Sigmoid colon (tissue), 7 donors: ENCODE measurements at regions of chrX and their contacts with region 1.

Region 1: GRCh38 chrX:123481913-123482851 is 250.7 kb downstream of the THOC2 start:
- DNase-seq: no peak
- H3K4me3 ChIP-seq: peak overlapping the region in 1 of 4 donors; percentile 14
- H3K27ac ChIP-seq: peak overlapping the region in 3 of 4 donors; percentile 67 to 78 (median 73)
- H3K4me1 ChIP-seq: peaks cover 0 to 11% (median 0%) of the 10 kb centered on the region in 4 donors
- H3K27me3 ChIP-seq: no peaks in the 10 kb centered on the region
- CTCF ChIP-seq: peak in 1 of 4 experiments; percentile 28
- EP300 ChIP-seq: peak in 1 of 4 donors; percentile 37
- POLR2A ChIP-seq: no peak

Region 2: DNA sequence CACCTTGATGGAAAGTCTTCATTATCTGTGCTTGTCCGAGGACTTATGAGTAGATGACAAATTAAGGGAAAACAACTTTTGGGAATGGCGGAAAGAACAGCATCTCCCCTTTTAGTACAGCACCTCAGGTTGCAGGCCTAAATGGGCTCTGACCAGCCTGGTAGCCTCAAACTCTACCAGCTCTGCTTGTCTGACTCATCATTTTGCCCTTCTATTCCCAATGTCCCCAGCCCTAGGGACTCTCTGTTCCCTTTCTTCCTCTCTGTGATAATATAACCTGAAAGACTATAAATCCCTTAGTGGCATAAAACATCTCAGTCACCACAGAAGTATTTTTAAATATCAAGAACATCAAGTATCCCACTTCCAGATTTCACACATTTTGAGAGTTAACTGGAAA is 128.7 kb after region 1 on chrX:
- intact Hi-C with region 1: loop called (anchors 10 kb)
- DNase-seq: no peak
- H3K4me3 ChIP-seq: no peak overlapping the region
- H3K27ac ChIP-seq: no peak overlapping the region
- H3K4me1 ChIP-seq: no peaks in the 10 kb centered on the region
- H3K27me3 ChIP-seq: no peaks in the 10 kb centered on the region
- CTCF ChIP-seq: no peak
- EP300 ChIP-seq: no peak
- POLR2A ChIP-seq: no peak

Region 3: DNA sequence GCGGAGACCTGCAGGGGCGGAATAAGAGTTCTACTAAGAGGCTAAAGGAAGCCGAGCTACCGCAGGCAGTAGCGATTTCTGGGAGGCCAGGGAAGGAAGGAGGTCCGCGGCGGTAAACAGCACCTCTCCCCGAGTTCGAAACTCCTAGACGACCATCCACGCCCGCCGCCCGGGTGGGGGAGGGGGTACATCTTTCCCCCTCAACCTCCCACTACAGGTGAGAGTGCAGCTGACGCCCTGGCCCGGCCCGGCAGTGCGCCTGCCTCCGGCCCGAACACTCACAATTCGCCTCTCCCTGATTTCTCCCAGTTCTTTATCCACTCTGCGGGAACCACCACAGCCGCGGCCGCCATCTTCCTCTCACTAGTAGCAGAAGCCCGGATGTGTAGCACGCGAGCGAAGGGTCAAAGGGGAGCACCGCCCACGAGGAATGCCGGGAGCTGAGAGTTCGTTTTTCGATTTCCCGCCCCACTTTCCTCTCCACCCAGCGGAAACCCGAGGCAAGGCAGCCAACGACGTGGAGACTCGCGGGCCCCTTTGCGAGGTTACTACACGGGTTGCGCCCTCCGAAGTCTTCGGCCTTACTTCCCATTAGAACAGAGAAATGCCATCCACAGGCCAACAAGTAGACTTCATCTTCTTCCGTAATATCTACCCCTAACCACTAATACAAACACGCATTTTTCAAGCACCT is 250.6 kb after region 1 on chrX and contains the start of gene THOC2:
- intact Hi-C with region 1: loop called (anchors 10 kb)
- DNase-seq: peak; percentile 92
- H3K4me3 ChIP-seq: peak within 1 kb of the TSS; percentile 66 to 79 (median 70)
- H3K27ac ChIP-seq: peak within 1 kb of the TSS; percentile 81 to 88 (median 84)
- H3K4me1 ChIP-seq: peaks cover 0 to 32% (median 4%) of the 10 kb centered on the region in 4 donors
- H3K27me3 ChIP-seq: no peaks in the 10 kb centered on the region
- CTCF ChIP-seq: peak; percentile 20 to 52 (median 40)
- EP300 ChIP-seq: no peak
- POLR2A ChIP-seq: peak in 1 of 2 donors; percentile 32
- total RNA-seq, gene THOC2: 85.6 to 126 (median 102) TPM

Region 4: GRCh38 chrX:124190440-124190839 is 708.3 kb after region 1 on chrX:
- intact Hi-C with region 1: no loop called
- DNase-seq: no peak
- H3K4me3 ChIP-seq: no peak overlapping the region
- H3K27ac ChIP-seq: no peak overlapping the region
- H3K4me1 ChIP-seq: peaks cover 0 to 13% (median 3%) of the 10 kb centered on the region in 4 donors
- H3K27me3 ChIP-seq: no peaks in the 10 kb centered on the region
- CTCF ChIP-seq: no peak
- EP300 ChIP-seq: no peak
- POLR2A ChIP-seq: no peak